CD14-positive monocyte (primary cell): ENCODE measurements at regions of chr1 and their contacts with region 1.

Region 1: GRCh38 chr1:45359882-45360513 is 19.8 kb upstream of the MUTYH start:
- DNase-seq: peak; percentile 51 to 66 (median 63)
- H3K4me3 ChIP-seq: peak overlapping the region in 1 of 3 experiments; percentile 41
- H3K4me3 Mint-ChIP-seq: peak overlapping the region; percentile 29 to 58
- H3K27ac ChIP-seq: no peak overlapping the region
- H3K27ac Mint-ChIP-seq: peak overlapping the region in 5 of 7 donors; percentile 5 to 68 (median 14)
- H3K4me1 ChIP-seq: peaks cover 8% of the 10 kb centered on the region in 2 donors
- H3K4me1 Mint-ChIP-seq: peaks cover 13% of the 10 kb centered on the region
- H3K27me3 ChIP-seq: no peaks in the 10 kb centered on the region
- H3K27me3 Mint-ChIP-seq: no peaks in the 10 kb centered on the region
- CTCF ChIP-seq: peak; percentile 83

Region 2: GRCh38 chr1:45423906-45424678 is 64.1 kb after region 1 on chr1:
- intact Hi-C with region 1: no loop called
- DNase-seq: peak in 1 of 3 donors; percentile 20
- H3K4me3 ChIP-seq: no peak overlapping the region
- H3K4me3 Mint-ChIP-seq: no peak overlapping the region
- H3K27ac ChIP-seq: peak overlapping the region in 1 of 2 donors; percentile 18
- H3K27ac Mint-ChIP-seq: peak overlapping the region in 2 of 7 donors; percentile 3 to 66
- H3K4me1 ChIP-seq: no peaks in the 10 kb centered on the region
- H3K4me1 Mint-ChIP-seq: peaks cover 6% of the 10 kb centered on the region
- H3K27me3 ChIP-seq: no peaks in the 10 kb centered on the region
- H3K27me3 Mint-ChIP-seq: peaks cover 0 to 4% (median 0%) of the 10 kb centered on the region in 3 donors
- CTCF ChIP-seq: no peak

Region 3: GRCh38 chr1:45478121-45478814 is 118.3 kb after region 1 on chr1:
- intact Hi-C with region 1: loop called in 1 of 2 experiments (anchors 5 kb)
- DNase-seq: no peak
- H3K4me3 ChIP-seq: no peak overlapping the region
- H3K4me3 Mint-ChIP-seq: no peak overlapping the region
- H3K27ac ChIP-seq: no peak overlapping the region
- H3K27ac Mint-ChIP-seq: peak overlapping the region in 1 of 7 donors; percentile 0
- H3K4me1 ChIP-seq: peaks cover under 1 to 1% of the 10 kb centered on the region in 2 donors
- H3K4me1 Mint-ChIP-seq: peaks cover 10% of the 10 kb centered on the region
- H3K27me3 ChIP-seq: no peaks in the 10 kb centered on the region
- H3K27me3 Mint-ChIP-seq: no peaks in the 10 kb centered on the region
- CTCF ChIP-seq: no peak

Region 4: DNA sequence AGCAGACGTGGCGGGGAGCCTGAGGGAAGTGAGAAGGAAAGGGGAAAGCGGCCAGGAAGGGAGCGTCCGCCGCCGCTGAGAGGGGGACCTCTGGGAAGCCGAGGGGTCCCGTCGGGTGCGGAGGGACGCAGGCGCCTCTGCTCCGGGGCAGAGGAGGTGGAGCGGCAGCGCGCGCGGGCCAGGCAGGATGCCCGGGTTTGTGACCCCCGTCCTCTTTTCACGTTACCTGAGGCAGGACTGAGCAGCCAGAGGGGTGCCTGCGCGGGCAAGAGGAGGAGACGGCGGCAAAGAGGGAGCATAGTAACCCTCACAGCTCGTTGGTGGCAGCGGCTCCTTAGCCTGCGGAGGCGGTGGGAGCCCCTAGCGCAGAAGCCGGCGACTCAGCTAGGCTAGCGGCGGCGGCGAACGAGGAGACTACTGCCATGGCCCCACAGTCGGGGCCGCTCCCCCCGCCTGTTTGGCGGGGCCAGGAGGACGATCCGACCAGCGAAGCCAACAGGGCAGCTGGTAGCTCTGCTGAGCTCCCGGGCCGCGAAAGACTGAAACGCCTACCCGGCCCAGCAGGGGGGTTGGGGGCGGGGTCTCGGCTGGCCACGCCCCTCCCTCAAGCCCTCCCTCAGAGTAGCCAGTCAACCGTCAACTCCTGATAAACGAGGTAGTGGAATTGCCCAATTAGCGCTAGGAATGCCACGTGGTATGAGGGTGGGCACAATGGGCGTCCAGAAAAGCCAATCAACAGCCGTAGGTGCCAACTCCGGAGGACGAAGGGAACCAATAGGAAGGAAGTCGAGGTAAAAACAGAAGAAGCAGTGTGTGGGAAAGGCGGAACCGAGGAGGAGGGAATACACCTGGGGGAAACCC is 130.9 kb after region 1 on chr1 and contains the start of gene TESK2:
- intact Hi-C with region 1: loop called (anchors 1 to 2 kb)
- DNase-seq: peak; percentile 99 to 100 (median 99)
- H3K4me3 ChIP-seq: peak within 1 kb of the TSS; percentile 72 to 99 (median 97)
- H3K4me3 Mint-ChIP-seq: no peak within 1 kb of the TSS
- H3K27ac ChIP-seq: peak within 1 kb of the TSS; percentile 52 to 76
- H3K27ac Mint-ChIP-seq: peak within 1 kb of the TSS in 1 of 7 donors; percentile 21
- H3K4me1 ChIP-seq: peaks cover 23 to 28% of the 10 kb centered on the region in 2 donors
- H3K4me1 Mint-ChIP-seq: peaks cover 5% of the 10 kb centered on the region
- H3K27me3 ChIP-seq: no peaks in the 10 kb centered on the region
- H3K27me3 Mint-ChIP-seq: peaks cover 0 to 3% (median 3%) of the 10 kb centered on the region in 3 donors
- CTCF ChIP-seq: no peak
- polyA plus RNA-seq, gene TESK2: 3.9 to 13.1 (median 4.1) TPM